ENCODE measurements at regions of chr22 and their contacts with region 1.

Region 1: DNA sequence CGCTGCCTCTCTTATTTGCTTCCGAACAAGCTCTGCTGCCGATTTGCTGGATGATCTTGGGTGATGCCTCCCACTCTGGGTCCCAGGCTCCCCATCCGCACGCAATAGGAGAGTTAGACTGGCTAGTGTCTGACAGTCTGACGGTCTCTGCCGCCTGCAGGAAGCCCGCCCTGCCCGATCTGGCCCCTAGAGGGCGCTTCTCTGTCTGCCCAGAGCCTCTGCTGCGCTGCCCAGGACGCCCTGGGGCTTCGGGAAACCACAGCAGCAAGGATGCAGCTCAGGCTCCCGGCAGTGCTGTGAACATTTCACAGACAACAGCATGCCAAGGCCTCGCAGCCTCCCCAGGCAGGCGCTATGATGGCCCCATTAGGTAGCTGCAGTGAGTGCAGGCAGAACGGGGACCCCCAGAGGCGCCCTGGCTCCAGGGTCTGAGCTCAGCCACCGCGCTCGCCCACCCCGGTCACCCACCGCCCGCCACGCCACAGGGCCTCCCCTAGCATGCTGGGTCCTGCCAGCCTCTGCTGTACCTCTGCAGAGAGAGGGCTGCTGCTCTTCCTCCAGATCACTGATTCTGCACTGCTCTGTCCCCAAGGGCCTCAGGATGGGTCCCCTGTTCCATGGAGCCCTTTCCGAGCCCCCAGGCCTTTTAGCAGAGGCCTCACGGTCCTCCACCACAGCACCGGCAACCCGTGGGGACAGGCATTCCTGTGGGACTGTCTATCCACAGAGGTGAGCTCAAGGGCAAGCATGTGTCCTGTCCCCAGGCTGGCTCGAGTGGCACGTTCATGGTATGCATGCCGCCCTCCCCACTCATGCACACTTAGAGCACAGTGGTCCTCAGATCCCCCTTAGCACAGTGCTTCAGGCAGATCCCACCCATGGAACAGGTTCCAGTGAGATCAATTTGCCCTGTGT is 4.3 kb upstream of the BAIAP2L2 start:
- DNase-seq: peak; percentile 72 to 87
- H3K4me3 ChIP-seq: no peak overlapping the region
- H3K4me3 Mint-ChIP-seq: no peak overlapping the region
- H3K27ac Mint-ChIP-seq: no peak overlapping the region
- H3K4me1 ChIP-seq: peaks cover 21% of the 10 kb centered on the region
- H3K4me1 Mint-ChIP-seq: peaks cover 10% of the 10 kb centered on the region
- H3K27me3 ChIP-seq: no peaks in the 10 kb centered on the region
- H3K27me3 Mint-ChIP-seq: peaks cover 2% of the 10 kb centered on the region
- CTCF ChIP-seq: peak; percentile 85 to 86

Region 2: GRCh38 chr22:38214256-38215056 is 99.7 kb after region 1 on chr22:
- CTCF ChIA-PET with region 1: no interaction called
- POLR2A ChIA-PET with region 1: no interaction called
- intact Hi-C with region 1: loop called (anchors 10 kb)
- DNase-seq: peak in 1 of 2 experiments; percentile 29
- H3K4me3 ChIP-seq: no peak overlapping the region
- H3K4me3 Mint-ChIP-seq: no peak overlapping the region
- H3K27ac Mint-ChIP-seq: peak overlapping the region; percentile 41
- H3K4me1 ChIP-seq: peaks cover 17% of the 10 kb centered on the region
- H3K4me1 Mint-ChIP-seq: peaks cover 5% of the 10 kb centered on the region
- H3K27me3 ChIP-seq: no peaks in the 10 kb centered on the region
- H3K27me3 Mint-ChIP-seq: no peaks in the 10 kb centered on the region
- CTCF ChIP-seq: no peak